Naive thymus-derived CD4-positive, alpha-beta T cell (primary cell): ENCODE measurements at regions of chr3 and their contacts with region 1.

Region 1: GRCh38 chr3:182980204-182981037 is at the start of gene DCUN1D1:
- DNase-seq: peak; percentile 77 to 95 (median 85)
- ATAC-seq: peak; percentile 94
- H3K4me3 ChIP-seq: peak within 1 kb of the TSS; percentile 75
- H3K4me3 Mint-ChIP-seq: peak within 1 kb of the TSS in 9 of 10 donors; percentile 87 to 97 (median 91)
- H3K27ac ChIP-seq: peak within 1 kb of the TSS; percentile 79
- H3K27ac Mint-ChIP-seq: peak within 1 kb of the TSS; percentile 73 to 95 (median 91)
- H3K4me1 ChIP-seq: peaks cover 18 to 20% of the 10 kb centered on the region in 2 donors
- H3K4me1 Mint-ChIP-seq: peaks cover 14 to 46% (median 42%) of the 10 kb centered on the region in 7 donors
- H3K27me3 ChIP-seq: no peaks in the 10 kb centered on the region
- H3K27me3 Mint-ChIP-seq: no peaks in the 10 kb centered on the region
- total RNA-seq, gene DCUN1D1: 23.7 to 53.0 (median 34.0) TPM

Region 2: GRCh38 chr3:181859518-181859917 is 1120.9 kb before region 1 on chr3:
- CTCF ChIA-PET with region 1: no interaction called
- POLR2A ChIA-PET with region 1: no interaction called
- intact Hi-C with region 1: no loop called
- DNase-seq: no peak
- ATAC-seq: no peak
- H3K4me3 ChIP-seq: no peak overlapping the region
- H3K4me3 Mint-ChIP-seq: no peak overlapping the region
- H3K27ac ChIP-seq: no peak overlapping the region
- H3K27ac Mint-ChIP-seq: no peak overlapping the region
- H3K4me1 ChIP-seq: no peaks in the 10 kb centered on the region
- H3K4me1 Mint-ChIP-seq: no peaks in the 10 kb centered on the region
- H3K27me3 ChIP-seq: no peaks in the 10 kb centered on the region
- H3K27me3 Mint-ChIP-seq: no peaks in the 10 kb centered on the region

Region 3: DNA sequence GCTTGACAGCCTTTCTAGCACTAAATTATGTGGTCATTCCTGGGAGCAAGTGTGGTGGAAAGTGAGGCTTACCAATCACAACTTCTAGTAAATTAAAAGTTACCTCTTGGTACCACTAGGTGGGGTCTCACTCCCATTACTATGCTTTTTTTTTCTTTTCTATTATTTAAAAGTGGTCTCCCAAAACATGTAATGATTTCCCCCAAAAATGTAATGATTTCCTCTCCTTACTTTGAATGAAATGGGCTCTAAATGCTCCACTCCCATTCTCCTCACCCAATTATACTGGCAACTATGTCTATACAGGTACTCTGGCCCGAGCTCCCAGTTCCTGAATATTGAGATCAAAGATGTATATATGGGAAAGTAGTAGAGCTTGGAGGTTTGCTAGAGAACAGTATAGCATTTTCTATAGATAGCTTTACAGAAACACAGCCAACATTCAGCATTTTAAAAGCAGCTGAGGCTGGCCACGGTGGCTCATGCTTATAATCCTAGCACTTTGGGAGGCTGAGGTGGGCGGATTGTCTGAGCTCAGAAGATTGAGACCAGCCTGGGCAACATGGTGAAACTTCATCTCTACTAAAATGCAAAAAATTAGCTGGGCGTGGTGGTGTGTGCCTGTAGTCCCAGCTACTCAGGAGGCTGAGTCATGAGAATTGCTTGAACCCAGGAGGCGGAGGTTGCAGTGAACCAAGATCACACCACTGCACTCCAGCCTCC is 70.9 kb before region 1 on chr3:
- CTCF ChIA-PET with region 1: interaction called, 4 read pairs
- POLR2A ChIA-PET with region 1: interaction called, 3 read pairs
- intact Hi-C with region 1: loop called (anchors 1 to 2 kb)
- DNase-seq: peak in 1 of 9 donors; percentile 16
- ATAC-seq: peak; percentile 46
- H3K4me3 ChIP-seq: no peak overlapping the region
- H3K4me3 Mint-ChIP-seq: no peak overlapping the region
- H3K27ac ChIP-seq: peak overlapping the region; percentile 16
- H3K27ac Mint-ChIP-seq: peak overlapping the region in 8 of 9 donors; percentile 20 to 88 (median 72)
- H3K4me1 ChIP-seq: peaks cover 15 to 17% of the 10 kb centered on the region in 2 donors
- H3K4me1 Mint-ChIP-seq: peaks cover 22 to 50% (median 42%) of the 10 kb centered on the region in 7 donors
- H3K27me3 ChIP-seq: no peaks in the 10 kb centered on the region
- H3K27me3 Mint-ChIP-seq: no peaks in the 10 kb centered on the region

Region 4: DNA sequence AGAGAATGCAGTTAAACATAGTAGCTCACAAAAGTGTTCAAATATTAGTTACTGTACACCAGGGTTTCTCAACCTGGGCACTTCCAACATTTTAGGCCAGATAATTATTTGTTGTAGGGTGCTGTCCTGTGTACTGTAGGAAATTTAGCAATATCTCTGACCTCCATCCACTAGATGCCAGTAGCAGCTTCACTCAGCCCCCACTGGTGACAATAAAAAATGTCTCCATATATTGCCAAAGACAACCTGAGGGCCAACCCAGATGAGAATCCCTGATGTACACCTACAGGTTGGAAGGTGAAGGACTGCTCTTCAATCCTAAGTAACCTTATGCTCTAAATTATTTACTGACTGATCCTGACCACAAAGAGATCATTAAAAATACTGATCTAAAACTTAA is 32.5 kb before region 1 on chr3:
- CTCF ChIA-PET with region 1: interaction called, 6 read pairs
- POLR2A ChIA-PET with region 1: no interaction called
- intact Hi-C with region 1: loop called in 1 of 2 experiments (anchors 5 kb)
- DNase-seq: no peak
- ATAC-seq: no peak
- H3K4me3 ChIP-seq: no peak overlapping the region
- H3K4me3 Mint-ChIP-seq: no peak overlapping the region
- H3K27ac ChIP-seq: no peak overlapping the region
- H3K27ac Mint-ChIP-seq: peak overlapping the region in 1 of 9 donors; percentile 4
- H3K4me1 ChIP-seq: no peaks in the 10 kb centered on the region
- H3K4me1 Mint-ChIP-seq: peaks cover 0 to 9% (median 0%) of the 10 kb centered on the region in 7 donors
- H3K27me3 ChIP-seq: no peaks in the 10 kb centered on the region
- H3K27me3 Mint-ChIP-seq: no peaks in the 10 kb centered on the region

Region 5: GRCh38 chr3:182969277-182969676 is 11.1 kb before region 1 on chr3:
- CTCF ChIA-PET with region 1: no interaction called
- POLR2A ChIA-PET with region 1: interaction called, 17 read pairs
- intact Hi-C with region 1: loop called (anchors 1 to 2 kb)
- DNase-seq: no peak
- ATAC-seq: no peak
- H3K4me3 ChIP-seq: no peak overlapping the region
- H3K4me3 Mint-ChIP-seq: no peak overlapping the region
- H3K27ac ChIP-seq: no peak overlapping the region
- H3K27ac Mint-ChIP-seq: peak overlapping the region in 3 of 9 donors; percentile 0 to 87 (median 17)
- H3K4me1 ChIP-seq: peaks cover 0 to 17% of the 10 kb centered on the region in 2 donors
- H3K4me1 Mint-ChIP-seq: peaks cover 38 to 80% (median 72%) of the 10 kb centered on the region in 7 donors
- H3K27me3 ChIP-seq: no peaks in the 10 kb centered on the region
- H3K27me3 Mint-ChIP-seq: no peaks in the 10 kb centered on the region

Region 6: GRCh38 chr3:183385698-183386613 is 405.5 kb after region 1 on chr3:
- CTCF ChIA-PET with region 1: no interaction called
- POLR2A ChIA-PET with region 1: no interaction called
- intact Hi-C with region 1: no loop called
- DNase-seq: peak in 8 of 9 donors; percentile 40 to 67 (median 57)
- ATAC-seq: peak; percentile 81
- H3K4me3 ChIP-seq: no peak overlapping the region
- H3K4me3 Mint-ChIP-seq: no peak overlapping the region
- H3K27ac ChIP-seq: no peak overlapping the region
- H3K27ac Mint-ChIP-seq: peak overlapping the region in 1 of 9 donors; percentile 5
- H3K4me1 ChIP-seq: no peaks in the 10 kb centered on the region
- H3K4me1 Mint-ChIP-seq: peaks cover 0 to 6% (median 3%) of the 10 kb centered on the region in 7 donors
- H3K27me3 ChIP-seq: no peaks in the 10 kb centered on the region
- H3K27me3 Mint-ChIP-seq: no peaks in the 10 kb centered on the region